ENCODE measurements at regions of chr7 and their contacts with region 1.

Region 1: GRCh38 chr7:23811540-23811939 is 101.5 kb downstream of the STK31 start:
- DNase-seq: no peak
- ATAC-seq: no peak
- H3K4me3 ChIP-seq: no peak overlapping the region
- H3K27ac ChIP-seq: no peak overlapping the region
- H3K4me1 ChIP-seq: no peaks in the 10 kb centered on the region
- H3K27me3 ChIP-seq: no peaks in the 10 kb centered on the region

Region 2: GRCh38 chr7:24025094-24025493 is 213.6 kb after region 1 on chr7:
- intact Hi-C with region 1: no loop called
- DNase-seq: no peak
- ATAC-seq: no peak
- H3K4me3 ChIP-seq: no peak overlapping the region
- H3K27ac ChIP-seq: no peak overlapping the region
- H3K4me1 ChIP-seq: no peaks in the 10 kb centered on the region
- H3K27me3 ChIP-seq: no peaks in the 10 kb centered on the region

Region 3: DNA sequence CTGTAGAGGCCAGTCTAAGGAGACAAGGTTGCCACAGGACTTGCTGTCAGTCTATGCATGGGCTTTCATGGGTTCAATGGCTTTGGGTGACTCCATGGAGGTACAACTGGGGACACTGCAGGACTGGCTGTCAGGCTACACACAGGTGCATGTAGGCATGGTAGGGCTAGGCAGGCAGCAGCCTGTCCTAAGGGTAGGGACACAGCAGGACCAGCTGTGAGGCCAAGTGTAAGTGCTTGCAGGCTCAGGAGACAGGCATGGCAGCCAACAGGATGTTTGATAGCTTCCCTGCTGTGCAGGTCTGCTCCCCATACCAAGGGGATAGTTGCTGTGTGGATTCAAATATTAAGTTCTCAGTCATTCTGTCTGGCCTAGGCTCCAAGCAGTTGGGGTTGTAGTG is 291.4 kb after region 1 on chr7:
- intact Hi-C with region 1: no loop called
- DNase-seq: no peak
- ATAC-seq: no peak
- H3K4me3 ChIP-seq: no peak overlapping the region
- H3K27ac ChIP-seq: no peak overlapping the region
- H3K4me1 ChIP-seq: no peaks in the 10 kb centered on the region
- H3K27me3 ChIP-seq: no peaks in the 10 kb centered on the region

Region 4: GRCh38 chr7:24622646-24623182 is 811.2 kb after region 1 on chr7:
- intact Hi-C with region 1: loop called in 1 of 2 experiments (anchors 10 kb)
- DNase-seq: no peak
- ATAC-seq: no peak
- H3K4me3 ChIP-seq: no peak overlapping the region
- H3K27ac ChIP-seq: no peak overlapping the region
- H3K4me1 ChIP-seq: no peaks in the 10 kb centered on the region
- H3K27me3 ChIP-seq: no peaks in the 10 kb centered on the region

Measured in aorta (tissue), 5 donors.